ENCODE measurements at regions of chr11 and their contacts with region 1.

Region 1: GRCh38 chr11:130782361-130783221 is 133.7 kb downstream of the SNX19 start:
- DNase-seq: no peak
- H3K4me3 Mint-ChIP-seq: no peak overlapping the region
- H3K27ac Mint-ChIP-seq: no peak overlapping the region
- H3K4me1 Mint-ChIP-seq: peaks cover 15% of the 10 kb centered on the region
- H3K27me3 Mint-ChIP-seq: no peaks in the 10 kb centered on the region
- CTCF ChIP-seq: no peak

Region 2: GRCh38 chr11:130671801-130672700 is 110.5 kb before region 1 on chr11:
- CTCF ChIA-PET with region 1: no interaction called
- intact Hi-C with region 1: loop called (anchors 10 kb)
- DNase-seq: no peak
- H3K4me3 Mint-ChIP-seq: no peak overlapping the region
- H3K27ac Mint-ChIP-seq: no peak overlapping the region
- H3K4me1 Mint-ChIP-seq: no peaks in the 10 kb centered on the region
- H3K27me3 Mint-ChIP-seq: no peaks in the 10 kb centered on the region
- CTCF ChIP-seq: no peak

Region 3: DNA sequence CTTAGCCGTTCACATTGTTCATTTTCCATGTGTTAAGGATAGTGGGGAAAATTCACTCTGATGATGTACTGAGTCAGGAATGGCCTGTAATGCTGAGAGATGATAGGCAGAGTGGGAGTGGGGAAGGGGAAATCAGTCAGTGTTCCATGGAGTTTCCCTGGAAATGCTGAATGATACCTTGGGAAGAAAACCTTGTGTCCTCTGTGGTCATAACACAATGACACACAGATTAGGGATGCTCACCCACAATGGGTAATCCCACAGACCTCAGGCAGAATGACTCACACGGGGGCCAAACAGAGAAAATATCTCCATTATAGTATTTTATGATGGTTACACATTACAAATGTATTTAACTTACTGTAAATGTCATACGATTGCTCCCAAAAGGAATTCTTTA is 15.7 kb after region 1 on chr11:
- CTCF ChIA-PET with region 1: no interaction called
- intact Hi-C with region 1: no loop called
- DNase-seq: no peak
- H3K4me3 Mint-ChIP-seq: no peak overlapping the region
- H3K27ac Mint-ChIP-seq: no peak overlapping the region
- H3K4me1 Mint-ChIP-seq: no peaks in the 10 kb centered on the region
- H3K27me3 Mint-ChIP-seq: no peaks in the 10 kb centered on the region
- CTCF ChIP-seq: no peak